ENCODE measurements at regions of chr5 and their contacts with region 1.

Region 1: GRCh38 chr5:81838307-81838906 is 87.5 kb upstream of the SSBP2 start:
- DNase-seq: no peak
- H3K4me3 ChIP-seq: no peak overlapping the region
- CTCF ChIP-seq: peak; percentile 64

Region 2: DNA sequence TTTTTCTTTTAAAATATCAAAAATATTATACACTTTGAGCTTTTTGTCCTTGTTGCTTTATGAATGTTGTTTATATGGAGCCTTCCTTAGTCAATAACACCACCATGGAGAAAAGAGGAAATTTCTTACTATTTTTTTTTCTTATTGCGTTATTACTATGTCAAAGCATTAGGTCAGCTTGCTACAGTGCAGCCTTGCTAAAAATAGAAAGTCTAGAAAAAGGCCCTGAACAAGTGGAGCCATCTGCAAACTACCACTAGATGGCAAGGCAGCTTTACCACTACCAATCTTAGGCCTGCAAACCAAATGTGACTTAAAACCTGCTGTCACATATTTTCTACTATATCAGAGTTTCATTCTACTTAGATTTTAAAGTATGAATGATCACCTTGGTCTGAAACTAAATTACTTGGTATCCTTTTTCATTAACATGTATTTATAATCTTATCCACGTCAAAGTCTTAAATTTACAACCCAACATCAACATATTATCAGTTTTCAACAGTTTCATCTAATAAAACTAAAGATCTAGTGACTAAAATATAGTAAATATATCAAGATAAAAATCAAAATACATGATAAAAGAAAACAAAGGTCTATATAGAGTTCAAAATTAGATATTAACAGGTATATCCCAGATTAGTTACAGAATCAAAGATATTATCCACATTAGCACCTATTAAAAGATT is 331.4 kb before region 1 on chr5:
- CTCF ChIA-PET with region 1: interaction called, 26 read pairs
- POLR2A ChIA-PET with region 1: no interaction called
- DNase-seq: peak; percentile 71
- H3K4me3 ChIP-seq: no peak overlapping the region
- CTCF ChIP-seq: peak; percentile 81

Region 3: GRCh38 chr5:81751009-81751835 is 87.2 kb before region 1 on chr5 and contains the start of gene SSBP2:
- CTCF ChIA-PET with region 1: interaction called, 10 read pairs
- POLR2A ChIA-PET with region 1: no interaction called
- DNase-seq: peak; percentile 92
- H3K4me3 ChIP-seq: peak within 1 kb of the TSS; percentile 85
- CTCF ChIP-seq: no peak

Region 4: GRCh38 chr5:81825237-81825636 is 13.2 kb before region 1 on chr5:
- CTCF ChIA-PET with region 1: interaction called, 17 read pairs
- POLR2A ChIA-PET with region 1: no interaction called
- DNase-seq: peak; percentile 16
- H3K4me3 ChIP-seq: no peak overlapping the region
- CTCF ChIP-seq: no peak

Region 5: DNA sequence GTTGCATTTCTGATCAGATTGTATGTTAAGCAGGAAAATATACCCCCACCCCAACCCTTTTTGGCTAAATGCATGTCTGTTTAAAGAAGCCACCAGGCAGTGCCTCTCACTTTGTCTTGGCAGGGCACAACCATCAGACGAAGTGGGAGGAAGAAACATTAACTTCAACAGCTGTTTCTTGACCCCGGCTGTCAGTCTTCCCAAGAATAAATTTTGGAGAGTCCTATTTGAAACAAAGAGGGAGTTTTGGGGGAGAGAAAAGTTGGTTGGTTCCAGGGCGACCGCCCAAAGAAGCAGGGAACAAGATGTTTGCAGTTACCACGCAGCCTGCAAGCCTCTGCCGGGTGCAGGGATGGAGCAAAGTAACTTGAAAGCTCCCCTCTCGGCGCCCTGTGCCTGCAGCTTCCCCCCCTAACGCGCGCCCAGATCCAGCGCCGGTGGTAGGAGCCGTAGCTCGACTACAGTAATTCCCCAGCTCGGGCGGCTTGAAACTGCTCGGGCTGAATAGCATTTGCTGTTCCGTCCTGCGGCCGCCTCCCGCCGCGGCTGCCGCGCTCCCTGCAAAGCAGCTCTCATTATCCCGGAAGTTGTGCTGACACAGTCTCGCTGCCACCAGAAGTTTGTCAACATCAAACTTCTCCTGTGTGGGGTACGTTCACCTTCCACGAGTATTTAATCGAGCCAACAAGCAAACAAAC is 13.2 kb after region 1 on chr5:
- CTCF ChIA-PET with region 1: interaction called, 30 read pairs
- POLR2A ChIA-PET with region 1: no interaction called
- DNase-seq: peak; percentile 69
- H3K4me3 ChIP-seq: peak overlapping the region; percentile 54
- CTCF ChIP-seq: no peak